ENCODE measurements at regions of chr3 and their contacts with region 1.

Region 1: DNA sequence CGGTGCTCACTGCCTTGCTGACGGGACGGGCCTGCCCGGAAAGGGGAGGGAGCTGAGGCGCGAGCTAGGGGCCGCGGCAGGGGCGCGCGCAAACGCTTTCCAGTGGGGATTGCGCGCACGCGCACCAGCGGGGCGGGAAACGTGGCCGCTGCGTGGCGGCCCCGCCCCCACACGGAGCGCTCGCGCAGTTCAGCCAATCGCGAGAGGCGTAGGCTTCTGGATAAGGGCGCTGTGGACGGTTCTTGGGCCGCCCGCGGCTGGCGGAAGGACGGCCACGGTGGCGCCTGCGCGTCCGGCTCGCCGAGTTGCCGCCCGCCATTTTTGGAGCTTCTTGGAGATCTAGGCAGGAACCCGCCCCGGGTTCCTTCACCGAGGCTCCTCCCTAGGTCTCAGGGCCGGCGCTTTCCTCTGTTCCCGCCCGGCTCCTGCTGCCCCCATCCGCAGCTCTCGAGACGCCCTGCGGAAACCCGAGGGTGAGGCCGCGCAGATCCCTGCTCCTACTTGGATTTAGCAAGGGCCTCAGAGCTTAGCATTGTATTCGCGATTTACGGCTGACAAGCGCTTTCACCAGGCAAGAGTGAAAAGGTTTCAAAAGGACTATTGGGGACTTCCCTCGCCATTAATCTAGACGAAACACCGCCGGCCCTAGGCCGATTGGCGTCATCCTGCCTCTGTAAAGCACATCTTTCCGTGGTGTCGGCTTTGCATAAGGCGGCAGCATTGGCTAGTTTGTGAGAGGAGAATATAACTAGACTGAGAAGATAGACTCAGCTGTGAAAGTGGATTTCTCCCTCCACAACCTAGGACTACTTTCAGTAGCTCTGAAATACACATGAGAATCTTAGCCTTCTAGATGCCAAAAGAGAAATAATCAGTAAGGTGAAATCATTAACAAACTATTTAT is 496 bp upstream of the STAG1 start:
- DNase-seq: peak; percentile 94
- ATAC-seq: peak; percentile 90
- H3K4me3 ChIP-seq: peak overlapping the region; percentile 63
- H3K27ac ChIP-seq: peak overlapping the region; percentile 91
- H3K4me1 ChIP-seq: peaks cover 16% of the 10 kb centered on the region
- H3K27me3 ChIP-seq: no peaks in the 10 kb centered on the region
- CTCF ChIP-seq: peak in 2 of 3 experiments; percentile 71 to 97; a peak in 4 of 6 replicates
- EP300 ChIP-seq: no peak
- POLR2A ChIP-seq: peak; percentile 89
- RAD21 ChIP-seq: peak; percentile 67

Region 2: GRCh38 chr3:136196401-136197158 is 556.1 kb before region 1 on chr3:
- CTCF ChIA-PET with region 1: interaction called, 20 read pairs
- POLR2A ChIA-PET with region 1: interaction called, 11 read pairs
- RAD21 ChIA-PET with region 1: interaction called, 53 read pairs
- SMC1A ChIA-PET with region 1: interaction called, 13 read pairs
- in situ Hi-C with region 1: no loop called
- intact Hi-C with region 1: loop called (anchors 1 kb)
- DNase-seq: peak; percentile 100
- ATAC-seq: peak; percentile 81
- H3K4me3 ChIP-seq: peak overlapping the region; percentile 69
- H3K27ac ChIP-seq: peak overlapping the region; percentile 99
- H3K4me1 ChIP-seq: peaks cover 9% of the 10 kb centered on the region
- H3K27me3 ChIP-seq: no peaks in the 10 kb centered on the region
- CTCF ChIP-seq: no peak
- EP300 ChIP-seq: no peak; a peak in 2 of 4 replicates
- POLR2A ChIP-seq: peak; percentile 89
- RAD21 ChIP-seq: no peak

Region 3: GRCh38 chr3:136385457-136385856 is 367.2 kb before region 1 on chr3:
- CTCF ChIA-PET with region 1: interaction called, 136 read pairs
- POLR2A ChIA-PET with region 1: interaction called, 10 read pairs
- RAD21 ChIA-PET with region 1: interaction called, 119 read pairs
- SMC1A ChIA-PET with region 1: interaction called, 106 read pairs
- in situ Hi-C with region 1: loop called (anchors 5 kb)
- intact Hi-C with region 1: loop called (anchors 2 kb)
- DNase-seq: no peak
- ATAC-seq: peak; percentile 98
- H3K4me3 ChIP-seq: no peak overlapping the region
- H3K27ac ChIP-seq: no peak overlapping the region
- H3K4me1 ChIP-seq: peaks cover 8% of the 10 kb centered on the region; the same call in 1 of the 2 replicates
- H3K27me3 ChIP-seq: no peaks in the 10 kb centered on the region
- CTCF ChIP-seq: no peak
- EP300 ChIP-seq: no peak
- POLR2A ChIP-seq: no peak
- RAD21 ChIP-seq: no peak

Region 4: GRCh38 chr3:136624894-136625815 is 127.5 kb before region 1 on chr3:
- CTCF ChIA-PET with region 1: interaction called, 3 read pairs
- POLR2A ChIA-PET with region 1: no interaction called
- RAD21 ChIA-PET with region 1: no interaction called
- SMC1A ChIA-PET with region 1: no interaction called
- in situ Hi-C with region 1: no loop called
- intact Hi-C with region 1: loop called (anchors 10 kb)
- DNase-seq: peak; percentile 15
- ATAC-seq: peak; percentile 82
- H3K4me3 ChIP-seq: no peak overlapping the region
- H3K27ac ChIP-seq: no peak overlapping the region
- H3K4me1 ChIP-seq: peaks cover 3% of the 10 kb centered on the region
- H3K27me3 ChIP-seq: no peaks in the 10 kb centered on the region
- CTCF ChIP-seq: no peak
- EP300 ChIP-seq: no peak
- POLR2A ChIP-seq: no peak
- RAD21 ChIP-seq: no peak

Region 5: DNA sequence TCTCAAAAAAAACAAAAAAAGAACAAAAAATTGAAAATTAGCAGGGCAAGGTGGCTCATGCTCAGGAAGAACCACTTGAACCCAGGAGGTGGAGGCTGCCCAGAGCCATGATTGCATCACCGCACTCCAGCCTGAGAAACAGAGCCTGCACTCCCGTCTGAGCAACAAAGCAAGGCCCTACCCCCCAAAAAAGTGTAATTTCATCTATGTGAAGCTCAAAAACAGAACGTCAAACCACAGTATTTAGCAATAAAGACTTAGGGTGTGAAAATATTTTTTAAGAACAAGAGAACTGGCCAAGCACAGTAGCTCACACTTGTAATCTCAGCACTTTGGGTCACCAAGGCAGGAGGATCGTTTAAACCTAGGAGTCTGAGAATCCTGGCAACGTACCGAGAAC is 38.7 kb before region 1 on chr3:
- CTCF ChIA-PET with region 1: no interaction called
- POLR2A ChIA-PET with region 1: no interaction called
- RAD21 ChIA-PET with region 1: no interaction called
- SMC1A ChIA-PET with region 1: no interaction called
- in situ Hi-C with region 1: no loop called
- intact Hi-C with region 1: no loop called
- DNase-seq: no peak
- ATAC-seq: no peak
- H3K4me3 ChIP-seq: no peak overlapping the region
- H3K27ac ChIP-seq: no peak overlapping the region
- H3K4me1 ChIP-seq: no peaks in the 10 kb centered on the region
- H3K27me3 ChIP-seq: no peaks in the 10 kb centered on the region
- CTCF ChIP-seq: no peak
- EP300 ChIP-seq: no peak
- POLR2A ChIP-seq: no peak
- RAD21 ChIP-seq: no peak

Region 6: GRCh38 chr3:136802481-136802996 is 49.9 kb after region 1 on chr3:
- CTCF ChIA-PET with region 1: interaction called, 6 read pairs
- POLR2A ChIA-PET with region 1: interaction called, 5 read pairs
- RAD21 ChIA-PET with region 1: interaction called, 11 read pairs
- SMC1A ChIA-PET with region 1: interaction called, 9 read pairs
- in situ Hi-C with region 1: no loop called
- intact Hi-C with region 1: no loop called
- DNase-seq: no peak
- ATAC-seq: peak; percentile 73
- H3K4me3 ChIP-seq: no peak overlapping the region
- H3K27ac ChIP-seq: no peak overlapping the region
- H3K4me1 ChIP-seq: peaks cover 6% of the 10 kb centered on the region
- H3K27me3 ChIP-seq: no peaks in the 10 kb centered on the region; a peak in 1 of 4 replicates
- CTCF ChIP-seq: no peak
- EP300 ChIP-seq: no peak
- POLR2A ChIP-seq: no peak
- RAD21 ChIP-seq: no peak

Region 7: DNA sequence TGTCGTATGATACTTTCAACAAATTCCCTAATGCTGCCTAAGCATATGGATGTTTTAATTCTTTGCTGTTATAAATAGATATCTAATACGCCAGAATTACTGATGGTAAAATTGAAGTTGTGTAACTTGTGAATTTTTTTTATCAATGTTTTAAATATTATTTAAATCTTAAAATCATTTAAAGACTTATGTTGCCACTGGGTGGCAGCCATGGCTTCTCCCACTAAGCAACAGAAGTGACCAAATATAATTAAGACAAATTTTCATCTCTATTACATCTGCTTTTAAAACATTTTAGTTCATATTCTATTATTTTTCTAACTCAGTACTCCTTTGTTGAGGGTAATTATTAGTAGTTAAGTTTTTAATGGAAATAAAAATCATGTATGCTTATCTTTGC is 197.0 kb after region 1 on chr3:
- CTCF ChIA-PET with region 1: interaction called, 16 read pairs
- POLR2A ChIA-PET with region 1: interaction called, 3 read pairs
- RAD21 ChIA-PET with region 1: interaction called, 8 read pairs
- SMC1A ChIA-PET with region 1: interaction called, 7 read pairs
- in situ Hi-C with region 1: no loop called
- intact Hi-C with region 1: no loop called
- DNase-seq: no peak
- ATAC-seq: no peak
- H3K4me3 ChIP-seq: no peak overlapping the region
- H3K27ac ChIP-seq: no peak overlapping the region
- H3K4me1 ChIP-seq: peaks cover 15% of the 10 kb centered on the region
- H3K27me3 ChIP-seq: no peaks in the 10 kb centered on the region
- CTCF ChIP-seq: peak in 2 of 3 experiments; percentile 4 to 7; a peak in 1 of 6 replicates
- EP300 ChIP-seq: no peak
- POLR2A ChIP-seq: no peak
- RAD21 ChIP-seq: 0 out of 2 replicates have a peak, but pooled peaks have one; percentile 19

Region 8: GRCh38 chr3:137121704-137122314 is 369.1 kb after region 1 on chr3:
- CTCF ChIA-PET with region 1: no interaction called
- POLR2A ChIA-PET with region 1: no interaction called
- RAD21 ChIA-PET with region 1: no interaction called
- SMC1A ChIA-PET with region 1: no interaction called
- in situ Hi-C with region 1: no loop called
- intact Hi-C with region 1: no loop called
- DNase-seq: peak; percentile 8
- ATAC-seq: peak; percentile 92
- H3K4me3 ChIP-seq: no peak overlapping the region
- H3K27ac ChIP-seq: no peak overlapping the region
- H3K4me1 ChIP-seq: no peaks in the 10 kb centered on the region
- H3K27me3 ChIP-seq: no peaks in the 10 kb centered on the region
- CTCF ChIP-seq: peak; percentile 75 to 81 (median 80)
- EP300 ChIP-seq: no peak
- POLR2A ChIP-seq: no peak
- RAD21 ChIP-seq: peak; percentile 91

Measured in GM12878 (cell line).